ENCODE measurements at regions of chr11 and their contacts with region 1.

Region 1: DNA sequence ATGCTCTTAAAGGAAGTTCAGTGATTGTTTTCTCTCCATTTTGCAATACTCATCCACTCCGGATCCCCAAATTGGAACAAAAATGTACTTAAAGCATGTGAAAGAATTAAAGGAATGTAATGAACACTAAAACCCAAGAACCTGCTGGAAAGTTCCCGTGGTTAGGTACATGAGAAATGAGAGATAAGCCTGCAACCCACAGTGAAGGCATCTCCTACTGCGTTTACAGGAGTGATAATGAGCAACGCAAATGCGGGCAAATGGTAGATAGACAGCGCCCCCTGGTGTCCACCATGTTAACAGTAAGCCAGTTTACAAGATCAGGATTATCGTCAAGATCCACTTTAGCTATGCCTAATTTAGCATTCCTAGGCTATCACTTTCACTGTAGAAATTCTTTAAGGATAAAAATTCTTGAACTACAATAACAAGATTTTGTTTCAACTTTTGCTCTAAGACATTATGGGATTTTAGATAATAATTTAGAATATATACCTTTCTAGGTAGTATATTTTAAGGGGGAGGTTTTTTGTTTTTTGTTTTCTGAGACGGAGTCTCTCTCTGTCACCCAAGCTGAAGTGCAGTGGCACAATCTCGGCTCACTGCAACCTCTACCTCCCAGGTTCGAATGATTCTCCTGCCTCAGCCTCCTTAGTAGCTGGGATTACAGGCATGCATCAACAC is 29.9 kb downstream of the ALG9 start:
- DNase-seq: peak; percentile 91
- H3K4me3 ChIP-seq: no peak overlapping the region
- H3K27ac ChIP-seq: no peak overlapping the region
- H3K4me1 ChIP-seq: no peaks in the 10 kb centered on the region
- H3K27me3 ChIP-seq: no peaks in the 10 kb centered on the region
- CTCF ChIP-seq: peak; percentile 89

Region 2: GRCh38 chr11:111565114-111565720 is 276.3 kb before region 1 on chr11:
- intact Hi-C with region 1: loop called (anchors 5 kb)
- DNase-seq: peak; percentile 73
- H3K4me3 ChIP-seq: no peak overlapping the region
- H3K27ac ChIP-seq: no peak overlapping the region
- H3K4me1 ChIP-seq: no peaks in the 10 kb centered on the region
- H3K27me3 ChIP-seq: no peaks in the 10 kb centered on the region
- CTCF ChIP-seq: peak; percentile 96

Region 3: DNA sequence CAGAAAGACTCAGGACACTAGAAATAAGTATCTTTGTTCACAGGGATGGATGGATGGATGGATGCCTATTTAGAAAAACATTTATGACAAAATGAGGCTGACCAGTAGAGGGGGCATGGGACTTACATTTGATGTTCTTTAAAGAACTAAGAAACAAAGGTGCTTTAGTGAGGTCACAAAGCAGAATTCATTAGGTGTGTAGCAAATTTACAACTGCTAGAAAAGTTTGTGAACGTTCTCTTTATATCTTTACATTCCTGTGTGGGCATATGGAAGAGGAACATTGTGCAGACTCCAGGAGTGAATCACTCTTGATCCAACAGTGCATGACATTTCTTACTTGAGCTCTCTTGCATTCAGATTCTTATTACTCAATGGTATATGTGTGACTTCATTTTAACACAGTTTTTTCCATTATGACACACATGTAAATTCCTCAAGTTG is 255.1 kb before region 1 on chr11:
- intact Hi-C with region 1: loop called (anchors 5 kb)
- DNase-seq: peak; percentile 55
- H3K4me3 ChIP-seq: no peak overlapping the region
- H3K27ac ChIP-seq: no peak overlapping the region
- H3K4me1 ChIP-seq: no peaks in the 10 kb centered on the region
- H3K27me3 ChIP-seq: no peaks in the 10 kb centered on the region
- CTCF ChIP-seq: no peak

Region 4: DNA sequence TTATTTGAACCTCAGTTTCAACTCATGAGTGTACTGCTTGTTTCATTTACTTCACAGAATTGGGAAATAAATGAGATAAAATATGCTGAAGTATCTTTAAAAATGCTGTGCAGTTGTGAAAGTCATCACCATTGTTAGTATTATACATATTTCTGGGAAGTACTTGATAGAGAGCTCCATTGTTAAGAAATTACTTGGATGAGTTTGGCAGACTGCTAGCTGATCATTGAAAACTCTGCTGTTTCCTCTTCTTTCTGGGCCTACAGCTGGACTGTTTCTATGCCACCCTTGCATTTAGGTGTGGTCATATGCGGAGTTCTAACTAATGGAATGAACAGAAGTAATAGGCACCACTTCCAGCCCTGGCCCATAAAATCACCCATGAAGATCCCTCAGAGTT is 229.3 kb before region 1 on chr11:
- intact Hi-C with region 1: no loop called
- DNase-seq: no peak
- H3K4me3 ChIP-seq: no peak overlapping the region
- H3K27ac ChIP-seq: no peak overlapping the region
- H3K4me1 ChIP-seq: no peaks in the 10 kb centered on the region
- H3K27me3 ChIP-seq: no peaks in the 10 kb centered on the region
- CTCF ChIP-seq: no peak

Region 5: GRCh38 chr11:111676878-111677585 is 164.5 kb before region 1 on chr11:
- intact Hi-C with region 1: no loop called
- DNase-seq: no peak
- H3K4me3 ChIP-seq: no peak overlapping the region
- H3K27ac ChIP-seq: no peak overlapping the region
- H3K4me1 ChIP-seq: no peaks in the 10 kb centered on the region
- H3K27me3 ChIP-seq: no peaks in the 10 kb centered on the region
- CTCF ChIP-seq: no peak

Region 6: GRCh38 chr11:111777094-111778046 is 64.1 kb before region 1 on chr11:
- intact Hi-C with region 1: loop called (anchors 5 kb)
- DNase-seq: peak; percentile 33
- H3K4me3 ChIP-seq: no peak overlapping the region
- H3K27ac ChIP-seq: no peak overlapping the region
- H3K4me1 ChIP-seq: no peaks in the 10 kb centered on the region
- H3K27me3 ChIP-seq: no peaks in the 10 kb centered on the region
- CTCF ChIP-seq: peak; percentile 65

Measured in colonic mucosa (tissue), 4 donors.